A673 (cell line): ENCODE measurements at regions of chr16 and their contacts with region 1.

Region 1: GRCh38 chr16:54286090-54286993 is at the start of gene IRX3:
- DNase-seq: peak; percentile 97
- H3K4me3 ChIP-seq: peak within 1 kb of the TSS; percentile 74
- H3K27ac ChIP-seq: peak within 1 kb of the TSS; percentile 94
- H3K4me1 ChIP-seq: no peaks in the 10 kb centered on the region
- H3K27me3 ChIP-seq: no peaks in the 10 kb centered on the region
- CTCF ChIP-seq: no peak
- total RNA-seq, gene IRX3: 22.7 and 22.9 TPM in 2 replicates

Region 2: DNA sequence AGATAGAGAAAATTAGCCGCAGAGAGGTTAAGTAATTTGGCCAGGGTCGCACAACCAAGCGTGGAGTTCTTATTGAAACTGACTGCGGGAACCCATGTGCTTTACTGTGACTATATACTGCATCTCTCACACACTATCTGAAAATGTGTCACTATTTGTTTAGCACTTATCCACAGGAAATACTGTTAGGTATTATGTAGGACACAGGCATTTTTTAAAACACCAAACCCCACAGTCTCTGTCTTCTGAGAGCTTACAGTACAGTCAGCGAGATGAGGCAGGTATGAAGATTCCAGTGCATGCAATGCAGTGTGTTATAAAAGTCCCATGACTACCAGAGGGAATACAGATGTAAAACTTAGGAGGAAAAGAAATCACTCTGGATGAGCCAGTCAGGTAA is 840.8 kb before region 1 on chr16:
- CTCF ChIA-PET with region 1: no interaction called
- POLR2A ChIA-PET with region 1: no interaction called
- intact Hi-C with region 1: no loop called
- DNase-seq: no peak
- H3K4me3 ChIP-seq: no peak overlapping the region
- H3K27ac ChIP-seq: no peak overlapping the region
- H3K4me1 ChIP-seq: no peaks in the 10 kb centered on the region
- H3K27me3 ChIP-seq: no peaks in the 10 kb centered on the region
- CTCF ChIP-seq: no peak

Region 3: DNA sequence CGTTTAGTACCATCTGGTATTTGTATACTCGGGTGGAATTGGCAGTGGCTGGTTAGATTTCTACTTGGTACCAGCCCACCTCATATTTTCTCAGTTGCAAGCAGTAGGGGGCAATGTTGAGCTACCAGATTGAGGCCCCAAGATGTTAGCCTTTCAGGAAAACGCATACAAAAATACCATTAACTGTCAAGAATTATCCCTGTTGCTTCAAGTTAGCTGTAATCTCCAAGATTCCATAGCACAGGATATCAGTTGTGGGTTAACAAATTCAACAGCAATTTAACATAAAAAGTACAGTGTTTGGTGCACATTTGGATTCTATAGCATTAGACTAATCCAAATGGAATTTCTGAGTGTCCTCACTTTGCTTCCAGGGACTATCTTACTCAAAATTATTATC is 394.2 kb before region 1 on chr16:
- CTCF ChIA-PET with region 1: no interaction called
- POLR2A ChIA-PET with region 1: no interaction called
- intact Hi-C with region 1: loop called (anchors 5 kb)
- DNase-seq: peak; percentile 77
- H3K4me3 ChIP-seq: no peak overlapping the region
- H3K27ac ChIP-seq: no peak overlapping the region
- H3K4me1 ChIP-seq: peaks cover 42% of the 10 kb centered on the region
- H3K27me3 ChIP-seq: no peaks in the 10 kb centered on the region
- CTCF ChIP-seq: peak; percentile 85

Region 4: GRCh38 chr16:53945996-53946395 is 340.3 kb before region 1 on chr16:
- CTCF ChIA-PET with region 1: no interaction called
- POLR2A ChIA-PET with region 1: no interaction called
- intact Hi-C with region 1: loop called (anchors 10 kb)
- DNase-seq: peak; percentile 59
- H3K4me3 ChIP-seq: no peak overlapping the region
- H3K27ac ChIP-seq: no peak overlapping the region
- H3K4me1 ChIP-seq: peaks cover 7% of the 10 kb centered on the region
- H3K27me3 ChIP-seq: no peaks in the 10 kb centered on the region
- CTCF ChIP-seq: peak; percentile 90

Region 5: GRCh38 chr16:54473226-54473993 is 187.1 kb after region 1 on chr16:
- CTCF ChIA-PET with region 1: no interaction called
- POLR2A ChIA-PET with region 1: no interaction called
- intact Hi-C with region 1: loop called (anchors 10 kb)
- DNase-seq: no peak
- H3K4me3 ChIP-seq: no peak overlapping the region
- H3K27ac ChIP-seq: no peak overlapping the region
- H3K4me1 ChIP-seq: peaks cover 27% of the 10 kb centered on the region
- H3K27me3 ChIP-seq: no peaks in the 10 kb centered on the region
- CTCF ChIP-seq: no peak